WTC11 (cell line): ENCODE measurements at regions of chr22 and their contacts with region 1.

Region 1: GRCh38 chr22:30289134-30289979 is at the start of gene CASTOR1:
- DNase-seq: peak; percentile 99
- ATAC-seq: peak; percentile 87
- H3K4me3 Mint-ChIP-seq: peak within 1 kb of the TSS; percentile 80
- H3K27ac Mint-ChIP-seq: peak within 1 kb of the TSS; percentile 93
- H3K4me1 Mint-ChIP-seq: peaks cover 11% of the 10 kb centered on the region
- H3K27me3 Mint-ChIP-seq: peaks cover 3% of the 10 kb centered on the region
- CTCF ChIP-seq: no peak
- total RNA-seq, gene CASTOR1: 15.8 to 18.6 TPM (median 16.0 TPM) in 3 replicates

Region 2: DNA sequence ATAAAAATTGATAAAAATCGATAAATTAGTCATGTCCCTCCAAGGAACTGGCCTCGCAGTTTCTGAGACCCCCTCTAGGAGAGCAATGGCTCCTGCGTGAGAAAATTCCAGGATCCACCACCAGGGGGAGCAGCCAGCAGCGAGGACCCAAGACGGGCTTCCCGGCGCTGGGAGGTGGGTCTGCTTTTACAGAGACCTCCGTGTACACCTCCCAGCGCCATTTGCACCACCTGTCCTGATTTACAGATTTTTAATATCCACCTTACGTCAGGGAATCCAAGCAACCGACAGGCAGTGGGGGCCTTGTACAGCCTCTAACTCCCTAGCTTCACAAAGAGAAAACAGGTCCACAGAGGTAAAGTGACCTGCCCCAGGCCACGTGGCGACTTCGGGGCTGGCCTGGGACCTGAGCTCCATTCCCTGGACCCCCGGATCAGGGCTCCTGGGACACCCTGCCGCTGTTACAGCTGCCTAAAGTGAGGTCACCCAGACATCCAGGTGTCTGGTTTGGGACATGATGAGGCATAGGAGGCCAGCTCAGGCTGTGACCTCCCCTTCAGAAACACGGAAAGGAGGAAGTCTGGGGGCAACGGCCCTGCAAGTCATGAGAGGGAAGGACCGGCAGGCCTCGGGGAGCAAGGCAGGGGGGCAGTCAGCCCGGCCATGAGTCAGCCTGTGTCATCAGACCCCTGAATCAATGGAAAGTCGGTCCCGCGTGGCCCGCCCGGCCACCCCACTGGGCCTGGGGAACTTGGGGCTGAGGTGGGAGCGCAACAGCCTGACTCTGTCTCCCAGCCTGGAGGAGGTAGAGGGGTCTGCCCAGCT is 26.2 kb before region 1 on chr22:
- CTCF ChIA-PET with region 1: interaction called, 48 read pairs
- POLR2A ChIA-PET with region 1: interaction called, 5 read pairs
- DNase-seq: peak; percentile 94
- ATAC-seq: peak; percentile 77
- H3K4me3 Mint-ChIP-seq: no peak overlapping the region
- H3K27ac Mint-ChIP-seq: no peak overlapping the region
- H3K4me1 Mint-ChIP-seq: peaks cover 7% of the 10 kb centered on the region
- H3K27me3 Mint-ChIP-seq: peaks cover 7% of the 10 kb centered on the region
- CTCF ChIP-seq: peak; percentile 99

Region 3: GRCh38 chr22:30301995-30302809 is 12.8 kb after region 1 on chr22:
- CTCF ChIA-PET with region 1: interaction called, 57 read pairs
- POLR2A ChIA-PET with region 1: interaction called, 4 read pairs
- DNase-seq: no peak
- ATAC-seq: no peak
- H3K4me3 Mint-ChIP-seq: no peak overlapping the region
- H3K27ac Mint-ChIP-seq: peak overlapping the region; percentile 58; the same call in 1 of the 2 replicates
- H3K4me1 Mint-ChIP-seq: no peaks in the 10 kb centered on the region
- H3K27me3 Mint-ChIP-seq: no peaks in the 10 kb centered on the region
- CTCF ChIP-seq: no peak

Region 4: DNA sequence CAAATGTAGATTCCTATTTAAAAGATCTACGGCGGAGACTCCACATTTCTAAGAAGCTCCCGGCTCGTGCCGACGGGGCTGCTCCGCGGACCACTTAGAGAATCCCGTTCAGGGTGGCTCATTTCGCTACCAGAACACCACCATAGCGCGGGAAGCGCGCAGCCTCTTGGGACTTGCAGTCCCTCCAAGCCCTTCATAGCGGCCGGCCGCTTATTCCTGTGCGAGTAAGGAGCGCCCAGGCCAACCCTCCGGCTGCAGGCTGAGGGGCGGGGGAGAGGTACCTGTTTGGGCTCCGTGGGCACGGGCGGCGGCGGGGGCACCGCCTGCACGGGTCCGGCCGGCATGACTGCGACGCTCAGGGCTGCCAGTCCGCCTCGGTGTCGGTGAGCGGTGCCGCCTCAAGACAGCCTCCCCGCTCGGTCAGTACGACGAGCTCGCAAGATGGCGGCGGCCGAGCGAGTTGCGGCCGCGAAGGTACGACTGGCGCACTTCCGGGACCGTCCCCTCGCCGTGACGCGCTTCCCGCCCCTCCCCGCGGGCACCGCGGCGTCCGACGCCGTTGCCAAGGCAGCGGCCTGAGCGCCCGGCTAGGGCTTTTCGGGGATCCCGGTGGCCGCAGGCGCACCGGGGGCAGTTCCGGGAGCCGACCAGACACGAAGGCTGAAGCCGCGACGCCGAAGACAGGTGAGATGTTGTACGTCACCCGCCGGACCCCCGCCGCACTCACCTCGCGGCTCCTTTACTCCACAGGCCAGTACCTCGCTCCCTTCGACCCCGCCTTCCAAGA is 67.3 kb after region 1 on chr22 and contains the starts of genes CCDC157 and SF3A1:
- CTCF ChIA-PET with region 1: interaction called, 25 read pairs
- POLR2A ChIA-PET with region 1: interaction called, 11 read pairs
- DNase-seq: peak; percentile 91
- ATAC-seq: peak; percentile 90
- H3K4me3 Mint-ChIP-seq: peak within 1 kb of the TSS; percentile 95
- H3K27ac Mint-ChIP-seq: peak within 1 kb of the TSS; percentile 95
- H3K4me1 Mint-ChIP-seq: peaks cover 20% of the 10 kb centered on the region
- H3K27me3 Mint-ChIP-seq: no peaks in the 10 kb centered on the region
- CTCF ChIP-seq: no peak
- total RNA-seq, gene CCDC157: 3.8 to 6.5 TPM (median 4.2 TPM) in 3 replicates
- total RNA-seq, gene SF3A1: 214 to 272 TPM (median 227 TPM) in 3 replicates

Region 5: DNA sequence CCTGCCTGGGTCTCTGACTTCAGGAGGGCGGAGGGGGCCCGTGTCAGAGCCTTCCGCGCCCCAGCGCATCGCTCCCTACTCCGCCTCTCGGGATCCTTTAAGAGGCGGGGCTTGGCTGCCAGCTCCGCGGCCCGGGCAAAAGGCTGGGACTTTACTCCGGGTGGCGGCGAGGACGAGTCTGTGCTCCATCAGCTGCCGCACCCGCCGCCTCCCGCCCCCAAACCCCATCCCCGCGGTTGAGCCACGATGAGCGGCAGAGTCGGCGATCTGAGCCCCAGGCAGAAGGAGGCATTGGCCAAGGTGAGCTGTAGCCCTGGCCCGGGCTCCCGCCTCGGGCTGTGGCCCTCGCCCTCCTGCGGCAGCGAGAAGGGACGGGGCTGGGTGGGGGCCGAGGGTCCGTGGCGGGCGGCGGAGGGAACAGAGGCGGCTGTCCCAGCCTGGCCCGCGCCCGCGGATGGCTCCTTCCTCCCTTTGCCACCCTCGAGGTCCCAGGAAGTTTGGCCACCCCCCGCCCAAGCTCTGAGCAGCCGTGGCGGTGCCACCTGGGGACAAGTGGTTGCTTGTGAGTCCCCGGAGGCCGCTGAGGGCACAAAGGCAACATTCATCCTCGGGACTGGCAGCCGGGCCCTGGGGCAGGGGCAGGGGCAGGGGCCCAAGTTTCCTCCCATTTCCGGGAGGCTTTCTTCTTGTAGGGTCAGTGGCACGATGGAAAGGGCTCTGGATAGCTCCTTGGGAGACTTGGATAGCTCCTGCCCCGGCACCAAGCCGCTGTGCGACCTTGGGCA is 107.7 kb after region 1 on chr22 and contains the start of gene SEC14L2:
- CTCF ChIA-PET with region 1: interaction called, 109 read pairs
- POLR2A ChIA-PET with region 1: no interaction called
- DNase-seq: peak; percentile 76
- ATAC-seq: peak; percentile 84
- H3K4me3 Mint-ChIP-seq: peak within 1 kb of the TSS; percentile 85
- H3K27ac Mint-ChIP-seq: no peak within 1 kb of the TSS
- H3K4me1 Mint-ChIP-seq: peaks cover 37% of the 10 kb centered on the region
- H3K27me3 Mint-ChIP-seq: peaks cover 64% of the 10 kb centered on the region
- CTCF ChIP-seq: no peak
- total RNA-seq, gene SEC14L2: 2.4 to 3.9 TPM (median 3.9 TPM) in 3 replicates

Region 6: DNA sequence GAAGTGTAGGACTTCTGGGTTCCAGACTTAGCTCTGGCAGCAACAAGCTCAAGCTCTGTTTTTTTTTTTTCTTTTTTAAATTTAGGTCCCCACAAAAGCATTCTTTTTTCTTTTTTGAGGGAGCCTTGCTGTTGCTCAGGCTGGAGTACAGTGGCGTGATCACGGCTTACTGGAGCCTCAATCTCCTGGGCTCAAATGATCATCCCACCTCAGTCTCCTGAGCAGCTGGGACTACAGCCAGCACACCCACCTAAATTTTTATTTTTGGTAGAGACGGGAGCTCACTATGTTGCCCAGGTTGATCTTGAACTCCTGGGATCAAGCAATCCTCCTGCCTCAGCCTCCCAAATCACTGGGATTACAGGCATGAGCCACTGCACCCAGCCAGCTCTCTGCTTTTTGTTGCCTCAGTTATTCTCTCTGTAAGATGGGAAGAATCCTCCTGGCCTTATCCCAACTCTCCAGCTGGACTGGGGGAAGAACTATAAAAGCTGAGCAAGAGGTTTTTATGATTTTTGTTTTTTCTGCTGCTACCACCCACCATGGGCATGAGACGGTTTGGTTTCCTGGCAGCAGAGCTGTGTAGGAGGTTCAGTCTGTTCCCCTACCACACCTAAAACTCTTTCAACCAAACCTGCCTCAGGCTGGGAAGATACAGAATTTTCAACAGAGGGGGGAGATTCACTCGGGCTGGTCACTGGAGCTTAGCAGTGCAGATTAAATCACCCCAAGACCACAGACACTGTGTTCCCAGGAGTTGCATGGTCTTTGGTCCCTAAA is 124.6 kb after region 1 on chr22:
- CTCF ChIA-PET with region 1: no interaction called
- POLR2A ChIA-PET with region 1: no interaction called
- DNase-seq: no peak
- ATAC-seq: no peak
- H3K4me3 Mint-ChIP-seq: no peak overlapping the region
- H3K27ac Mint-ChIP-seq: no peak overlapping the region
- H3K4me1 Mint-ChIP-seq: no peaks in the 10 kb centered on the region
- H3K27me3 Mint-ChIP-seq: no peaks in the 10 kb centered on the region
- CTCF ChIP-seq: no peak

Region 7: DNA sequence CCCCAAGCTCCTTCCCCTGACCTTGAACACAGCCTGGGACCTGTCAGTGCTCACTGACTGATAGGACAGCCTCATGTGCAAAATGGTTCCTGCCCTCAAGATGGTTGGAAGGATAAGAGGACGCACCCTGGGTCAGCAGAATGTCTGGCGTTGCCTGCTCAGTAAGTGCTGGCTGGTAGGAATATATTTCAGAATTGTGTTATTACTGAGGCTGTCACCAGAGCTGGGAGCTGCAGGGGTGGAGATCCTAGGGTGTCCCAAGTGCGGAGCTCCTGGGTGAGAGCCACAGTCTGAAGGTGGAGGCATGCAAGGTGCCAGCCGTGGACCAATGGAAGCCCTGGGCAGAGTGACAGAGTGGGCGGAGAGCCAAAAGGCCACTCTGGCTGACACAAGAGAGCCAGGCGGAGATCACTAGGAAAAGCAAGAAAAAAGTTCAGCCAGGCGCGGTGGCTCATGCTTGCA is 217.2 kb after region 1 on chr22:
- CTCF ChIA-PET with region 1: no interaction called
- POLR2A ChIA-PET with region 1: no interaction called
- DNase-seq: no peak
- ATAC-seq: no peak
- H3K4me3 Mint-ChIP-seq: no peak overlapping the region
- H3K27ac Mint-ChIP-seq: no peak overlapping the region
- H3K4me1 Mint-ChIP-seq: no peaks in the 10 kb centered on the region
- H3K27me3 Mint-ChIP-seq: peaks cover 9% of the 10 kb centered on the region
- CTCF ChIP-seq: no peak